ENCODE measurements at regions of chr5 and their contacts with region 1.

Region 1: DNA sequence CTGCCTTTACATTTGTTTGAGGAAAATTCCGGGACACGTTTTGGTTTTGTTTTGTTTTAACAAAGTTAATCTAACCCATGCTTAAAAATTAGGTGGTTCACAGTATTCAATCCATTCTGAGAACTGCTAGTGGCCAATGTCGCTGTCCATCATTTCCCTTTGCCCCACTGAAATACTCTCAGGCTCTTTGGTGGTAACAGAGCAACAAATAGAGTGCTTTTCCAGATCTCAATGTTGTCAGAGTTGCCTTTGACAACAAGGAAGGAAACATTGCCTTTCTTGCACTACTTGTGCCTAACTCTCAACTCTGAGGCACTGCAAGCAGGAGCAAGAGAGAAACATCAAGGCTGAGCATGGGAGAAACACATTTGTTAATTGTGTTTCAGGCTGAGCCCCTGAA is 154.0 kb downstream of the MCTP1 start:
- DNase-seq: peak; percentile 40
- H3K4me3 ChIP-seq: no peak overlapping the region
- H3K27ac ChIP-seq: no peak overlapping the region
- H3K4me1 ChIP-seq: no peaks in the 10 kb centered on the region
- H3K27me3 ChIP-seq: peaks cover 1 to 3% of the 10 kb centered on the region in 2 experiments
- CTCF ChIP-seq: no peak
- POLR2A ChIP-seq: no peak

Region 2: DNA sequence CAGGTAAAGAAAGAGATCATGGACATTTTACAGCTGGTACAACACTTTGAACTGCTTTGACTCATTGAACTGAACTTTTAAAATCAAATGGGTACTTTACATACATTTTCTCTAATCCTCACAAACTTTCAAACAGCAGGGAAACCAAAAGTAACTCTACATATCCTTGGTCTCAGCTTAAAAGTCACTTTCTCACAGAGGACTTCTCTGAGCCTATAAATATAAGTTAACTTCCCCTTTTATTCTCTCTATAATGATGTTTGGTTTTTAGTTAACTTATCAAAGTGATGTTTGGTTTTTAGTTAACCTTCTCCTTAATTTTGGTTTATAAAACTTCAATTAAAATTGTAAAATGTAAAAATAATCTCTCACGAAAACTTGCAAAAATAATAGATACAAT is 55.8 kb before region 1 on chr5:
- CTCF ChIA-PET with region 1: no interaction called
- POLR2A ChIA-PET with region 1: no interaction called
- dilution Hi-C with region 1: no loop called
- intact Hi-C with region 1: no loop called
- DNase-seq: no peak
- H3K4me3 ChIP-seq: no peak overlapping the region
- H3K27ac ChIP-seq: no peak overlapping the region
- H3K4me1 ChIP-seq: peaks cover 30% of the 10 kb centered on the region
- H3K27me3 ChIP-seq: no peaks in the 10 kb centered on the region
- CTCF ChIP-seq: no peak
- POLR2A ChIP-seq: no peak

Region 3: DNA sequence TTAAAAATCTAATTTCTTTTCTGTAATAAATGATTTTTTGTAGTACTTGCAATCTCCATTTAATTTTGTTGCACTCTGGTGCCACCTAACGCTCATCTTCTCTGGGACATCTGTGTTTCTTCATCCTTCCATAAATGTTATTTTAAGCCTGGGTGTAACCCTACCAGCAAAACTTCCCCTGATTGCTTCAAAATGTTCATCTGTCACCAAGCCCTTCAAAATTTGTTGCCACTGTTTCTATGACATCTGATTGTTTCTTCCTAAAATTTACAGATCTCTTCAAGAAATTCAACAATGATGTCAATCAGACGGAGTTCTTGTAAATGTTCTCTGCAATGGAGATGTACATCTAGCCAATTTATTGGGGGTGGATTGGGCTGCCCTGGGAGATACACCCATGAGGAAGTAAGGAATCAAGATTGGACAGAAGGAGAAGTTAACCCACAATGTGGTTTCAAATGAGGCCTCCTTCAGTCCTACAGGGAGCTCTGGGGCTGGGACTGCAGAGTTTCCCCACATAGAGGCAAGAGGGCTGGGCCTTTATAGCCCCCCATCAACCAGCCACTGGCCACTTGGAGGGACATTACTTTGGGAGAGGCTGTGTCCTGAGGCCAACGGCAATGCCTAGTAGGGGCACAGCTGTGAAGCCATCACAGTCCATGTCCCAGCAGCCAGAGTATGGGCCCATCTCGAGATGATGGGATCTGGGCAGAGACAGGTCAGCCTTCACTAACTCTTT is 130.7 kb after region 1 on chr5:
- CTCF ChIA-PET with region 1: no interaction called
- POLR2A ChIA-PET with region 1: no interaction called
- dilution Hi-C with region 1: no loop called
- intact Hi-C with region 1: loop called (anchors 5 kb)
- DNase-seq: peak; percentile 72
- H3K4me3 ChIP-seq: no peak overlapping the region
- H3K27ac ChIP-seq: no peak overlapping the region
- H3K4me1 ChIP-seq: peaks cover 4% of the 10 kb centered on the region
- H3K27me3 ChIP-seq: peaks cover 3 to 8% of the 10 kb centered on the region in 2 experiments
- CTCF ChIP-seq: peak; percentile 39 to 41
- POLR2A ChIP-seq: no peak

Region 4: GRCh38 chr5:95460662-95461061 is 329.7 kb after region 1 on chr5:
- CTCF ChIA-PET with region 1: no interaction called
- POLR2A ChIA-PET with region 1: no interaction called
- dilution Hi-C with region 1: no loop called
- intact Hi-C with region 1: no loop called
- DNase-seq: no peak
- H3K4me3 ChIP-seq: no peak overlapping the region
- H3K27ac ChIP-seq: no peak overlapping the region
- H3K4me1 ChIP-seq: no peaks in the 10 kb centered on the region
- H3K27me3 ChIP-seq: no peaks in the 10 kb centered on the region
- CTCF ChIP-seq: no peak
- POLR2A ChIP-seq: no peak